MCF 10A (cell line): ENCODE measurements at regions of chr4 and their contacts with region 1.

Region 1: DNA sequence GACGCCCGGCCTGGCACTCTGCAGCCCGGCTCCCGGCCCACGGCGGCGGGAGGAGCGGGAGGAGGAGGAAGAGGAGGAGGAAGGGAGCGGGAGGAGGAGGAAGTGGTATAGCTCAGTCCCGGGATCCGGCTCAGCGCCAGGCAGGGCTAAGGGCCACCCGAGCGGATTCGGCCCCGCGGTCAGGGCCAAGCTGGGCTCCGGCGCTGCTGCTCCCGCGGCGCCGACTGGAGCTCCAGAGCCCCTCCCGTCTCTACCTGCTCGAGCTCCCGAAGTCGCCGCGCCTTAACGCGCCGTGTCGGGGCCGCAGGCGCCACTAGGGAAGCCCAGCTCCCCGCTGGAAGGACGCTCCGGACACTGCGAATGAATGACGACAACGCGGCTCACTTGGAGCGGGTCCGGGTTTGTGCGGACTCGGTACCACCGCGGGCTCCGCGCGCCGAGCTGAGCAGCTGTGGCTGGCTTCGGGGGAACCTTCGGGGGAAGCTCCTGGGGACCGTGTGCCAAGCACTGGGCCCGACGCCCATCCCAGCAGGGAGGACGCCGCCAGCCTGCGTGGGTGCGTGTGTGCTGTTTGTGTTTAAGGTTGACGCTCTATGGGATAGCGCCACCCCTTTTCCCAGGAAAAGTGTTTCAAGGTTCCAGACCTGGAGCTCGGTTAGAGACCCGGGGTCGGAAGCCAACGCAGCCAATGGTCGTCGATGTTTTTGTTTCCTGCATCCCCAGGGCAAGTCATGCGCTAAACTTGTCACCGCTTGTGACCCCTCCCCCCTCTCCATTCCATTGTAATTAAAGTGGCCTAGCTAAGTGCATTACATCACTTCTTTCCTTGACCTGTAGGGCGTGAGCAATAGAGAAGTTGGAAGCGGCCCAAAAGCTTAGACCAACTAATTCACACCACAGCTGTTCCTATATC is at the start of gene TBC1D9:
- DNase-seq: peak; percentile 92
- H3K4me3 Mint-ChIP-seq: peak within 1 kb of the TSS; percentile 82
- H3K27ac Mint-ChIP-seq: peak within 1 kb of the TSS; percentile 57
- H3K4me1 Mint-ChIP-seq: peaks cover 21% of the 10 kb centered on the region
- H3K27me3 Mint-ChIP-seq: no peaks in the 10 kb centered on the region
- CTCF ChIP-seq: no peak
- total RNA-seq, gene TBC1D9: 17.4 and 23.2 TPM in 2 replicates

Region 2: DNA sequence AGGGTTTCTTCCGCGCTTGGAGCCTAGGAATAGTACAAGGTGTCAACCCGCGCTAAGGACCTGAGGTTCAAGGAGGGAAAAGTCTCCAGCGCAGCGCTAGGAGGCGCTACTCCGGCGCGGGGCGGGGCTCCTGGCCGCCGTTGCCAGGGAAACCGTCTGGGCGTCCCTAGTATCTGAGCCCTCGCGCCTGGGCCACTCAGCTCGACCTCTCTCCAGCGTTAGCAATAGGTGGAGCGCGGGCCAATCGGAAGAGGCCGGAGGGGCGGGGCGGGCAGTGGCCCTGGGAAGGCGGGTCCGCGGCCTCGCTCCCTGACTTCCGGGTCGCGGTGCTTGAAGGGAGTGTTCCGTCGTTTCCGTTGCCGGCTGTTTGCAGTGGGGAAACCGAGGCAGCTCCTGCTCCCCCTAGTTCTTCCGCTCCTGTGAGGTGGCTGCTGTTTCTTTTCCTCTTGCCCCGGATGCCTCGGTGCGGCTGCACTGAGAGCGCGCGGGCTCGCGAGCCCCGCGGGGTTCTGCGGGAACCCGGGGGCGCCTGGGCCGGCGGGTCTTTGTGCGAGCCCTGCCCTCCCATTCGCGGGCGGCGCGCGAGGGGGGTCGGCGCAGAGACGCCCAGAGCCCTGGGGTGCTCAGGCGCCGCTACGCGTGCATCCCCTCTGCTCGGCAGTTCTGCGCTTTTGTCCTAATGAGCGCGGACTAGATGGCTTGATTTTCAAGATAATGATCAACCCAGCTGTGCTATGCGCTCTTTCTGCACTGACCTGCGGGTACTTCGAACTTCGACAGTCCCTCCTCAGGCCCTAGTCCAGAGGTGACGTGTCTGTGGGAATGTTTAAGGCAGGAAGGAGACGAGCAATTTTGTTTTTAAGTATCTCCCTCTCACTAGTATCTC is 232.5 kb before region 1 on chr4 and contains the start of gene ELMOD2:
- CTCF ChIA-PET with region 1: no interaction called
- POLR2A ChIA-PET with region 1: no interaction called
- intact Hi-C with region 1: loop called (anchors 10 kb)
- DNase-seq: peak; percentile 97
- H3K4me3 Mint-ChIP-seq: peak within 1 kb of the TSS; percentile 76
- H3K27ac Mint-ChIP-seq: peak within 1 kb of the TSS; percentile 47
- H3K4me1 Mint-ChIP-seq: no peaks in the 10 kb centered on the region
- H3K27me3 Mint-ChIP-seq: no peaks in the 10 kb centered on the region
- CTCF ChIP-seq: peak; percentile 84
- total RNA-seq, gene ELMOD2: 29.2 and 45.0 TPM in 2 replicates

Region 3: GRCh38 chr4:140666889-140667614 is 89.5 kb before region 1 on chr4:
- CTCF ChIA-PET with region 1: no interaction called
- POLR2A ChIA-PET with region 1: interaction called, 3 read pairs
- intact Hi-C with region 1: loop called (anchors 10 kb)
- DNase-seq: no peak
- H3K4me3 Mint-ChIP-seq: no peak overlapping the region
- H3K27ac Mint-ChIP-seq: no peak overlapping the region
- H3K4me1 Mint-ChIP-seq: peaks cover 6% of the 10 kb centered on the region
- H3K27me3 Mint-ChIP-seq: no peaks in the 10 kb centered on the region
- CTCF ChIP-seq: no peak

Region 4: GRCh38 chr4:140718241-140718952 is 38.2 kb before region 1 on chr4:
- CTCF ChIA-PET with region 1: no interaction called
- POLR2A ChIA-PET with region 1: interaction called, 11 read pairs
- intact Hi-C with region 1: no loop called
- DNase-seq: peak; percentile 50
- H3K4me3 Mint-ChIP-seq: no peak overlapping the region
- H3K27ac Mint-ChIP-seq: peak overlapping the region; percentile 72
- H3K4me1 Mint-ChIP-seq: peaks cover 21% of the 10 kb centered on the region
- H3K27me3 Mint-ChIP-seq: no peaks in the 10 kb centered on the region
- CTCF ChIP-seq: no peak

Region 5: GRCh38 chr4:140743194-140743931 is 13.2 kb before region 1 on chr4:
- CTCF ChIA-PET with region 1: interaction called, 9 read pairs
- POLR2A ChIA-PET with region 1: interaction called, 24 read pairs
- intact Hi-C with region 1: no loop called
- DNase-seq: peak; percentile 41
- H3K4me3 Mint-ChIP-seq: peak overlapping the region; percentile 58
- H3K27ac Mint-ChIP-seq: peak overlapping the region; percentile 96
- H3K4me1 Mint-ChIP-seq: peaks cover 35% of the 10 kb centered on the region
- H3K27me3 Mint-ChIP-seq: no peaks in the 10 kb centered on the region
- CTCF ChIP-seq: peak; percentile 27

Region 6: DNA sequence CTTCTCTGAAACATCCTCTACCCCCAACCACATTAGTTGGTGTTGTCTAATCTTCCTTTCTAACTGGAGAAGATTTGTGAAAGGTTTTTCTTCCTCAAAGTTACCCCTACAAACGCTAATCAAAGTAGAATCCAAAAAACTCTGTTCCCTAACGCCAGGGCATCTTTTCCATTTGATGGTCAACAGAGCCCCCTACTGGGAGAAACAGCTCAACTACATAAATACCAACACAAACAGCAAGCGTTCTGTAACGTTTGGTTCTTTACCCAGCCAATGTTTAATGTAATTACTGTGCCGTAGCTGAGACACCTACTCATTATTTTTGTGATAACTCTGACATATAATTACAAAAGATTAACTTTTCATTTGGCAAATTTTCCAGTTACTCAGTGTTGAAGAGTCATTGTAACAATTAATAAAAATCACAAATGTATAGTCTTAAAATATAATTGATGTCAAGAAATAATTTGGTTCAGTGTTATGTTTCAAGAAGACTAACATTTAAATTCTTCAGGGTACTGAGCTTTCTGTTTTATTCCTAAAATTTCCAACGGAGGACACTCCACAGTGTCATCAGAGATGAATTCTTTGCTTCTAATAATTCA is 94.6 kb after region 1 on chr4:
- CTCF ChIA-PET with region 1: interaction called, 5 read pairs
- POLR2A ChIA-PET with region 1: interaction called, 4 read pairs
- intact Hi-C with region 1: loop called (anchors 1 kb)
- DNase-seq: peak; percentile 79
- H3K4me3 Mint-ChIP-seq: no peak overlapping the region
- H3K27ac Mint-ChIP-seq: no peak overlapping the region
- H3K4me1 Mint-ChIP-seq: peaks cover 15% of the 10 kb centered on the region
- H3K27me3 Mint-ChIP-seq: no peaks in the 10 kb centered on the region
- CTCF ChIP-seq: peak; percentile 82